ENCODE measurements at regions of chr15 and their contacts with region 1.

Region 1: DNA sequence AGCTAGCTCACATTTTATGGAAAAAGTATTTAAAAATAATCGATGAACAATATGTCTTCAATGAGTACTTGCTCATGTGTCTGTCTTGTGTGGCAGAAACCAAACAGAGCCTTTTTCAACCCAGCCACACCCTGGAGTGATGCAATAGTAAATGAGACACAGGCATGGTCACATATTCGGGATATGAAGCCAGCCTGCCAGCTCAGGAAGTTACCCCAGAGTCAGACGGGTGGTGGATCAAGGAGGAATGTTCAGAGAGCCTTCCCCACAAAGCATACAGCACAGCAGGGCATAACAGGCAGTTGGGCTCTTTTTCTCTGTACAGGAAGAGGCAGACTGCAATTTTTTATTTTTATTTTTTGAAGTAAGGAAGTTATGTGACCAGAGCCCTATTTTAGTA is 27.3 kb downstream of the LARP6 start:
- DNase-seq: peak in 2 of 5 donors; percentile 50 to 60
- ATAC-seq: peak in 3 of 4 donors; percentile 21 to 75 (median 69)
- H3K4me3 ChIP-seq: no peak overlapping the region
- H3K27ac ChIP-seq: peak overlapping the region in 2 of 12 donors; percentile 36 to 48
- H3K4me1 ChIP-seq: peaks cover 0 to 41% (median 9%) of the 10 kb centered on the region in 12 donors
- H3K27me3 ChIP-seq: no peaks in the 10 kb centered on the region
- CTCF ChIP-seq: no peak
- POLR2A ChIP-seq: no peak

Region 2: DNA sequence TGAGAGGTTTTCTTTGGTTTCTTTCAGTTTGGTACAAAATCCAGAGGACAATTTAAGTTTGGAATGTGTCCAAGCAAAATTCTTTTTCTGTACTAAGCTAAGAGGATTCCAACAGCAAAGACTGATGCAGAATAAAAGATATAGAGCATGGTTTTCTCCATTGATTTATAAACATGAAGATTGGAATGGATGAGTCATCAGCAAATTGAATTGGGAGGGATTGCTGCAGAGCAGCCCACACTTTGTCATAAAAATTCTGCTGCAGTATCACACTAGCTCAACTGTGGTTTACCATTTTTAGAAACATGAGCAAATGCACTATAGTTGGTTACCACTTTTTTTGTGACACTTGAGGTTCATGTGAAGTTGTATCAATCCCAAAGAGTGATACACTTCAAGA is 43.4 kb after region 1 on chr15:
- intact Hi-C with region 1: loop called (anchors 1 to 5 kb)
- DNase-seq: no peak
- ATAC-seq: peak in 2 of 4 donors; percentile 42 to 45
- H3K4me3 ChIP-seq: no peak overlapping the region
- H3K27ac ChIP-seq: peak overlapping the region in 4 of 12 donors; percentile 7 to 37 (median 14)
- H3K4me1 ChIP-seq: peaks cover 0 to 39% (median 24%) of the 10 kb centered on the region in 12 donors
- H3K27me3 ChIP-seq: no peaks in the 10 kb centered on the region
- CTCF ChIP-seq: no peak
- POLR2A ChIP-seq: no peak

Region 3: DNA sequence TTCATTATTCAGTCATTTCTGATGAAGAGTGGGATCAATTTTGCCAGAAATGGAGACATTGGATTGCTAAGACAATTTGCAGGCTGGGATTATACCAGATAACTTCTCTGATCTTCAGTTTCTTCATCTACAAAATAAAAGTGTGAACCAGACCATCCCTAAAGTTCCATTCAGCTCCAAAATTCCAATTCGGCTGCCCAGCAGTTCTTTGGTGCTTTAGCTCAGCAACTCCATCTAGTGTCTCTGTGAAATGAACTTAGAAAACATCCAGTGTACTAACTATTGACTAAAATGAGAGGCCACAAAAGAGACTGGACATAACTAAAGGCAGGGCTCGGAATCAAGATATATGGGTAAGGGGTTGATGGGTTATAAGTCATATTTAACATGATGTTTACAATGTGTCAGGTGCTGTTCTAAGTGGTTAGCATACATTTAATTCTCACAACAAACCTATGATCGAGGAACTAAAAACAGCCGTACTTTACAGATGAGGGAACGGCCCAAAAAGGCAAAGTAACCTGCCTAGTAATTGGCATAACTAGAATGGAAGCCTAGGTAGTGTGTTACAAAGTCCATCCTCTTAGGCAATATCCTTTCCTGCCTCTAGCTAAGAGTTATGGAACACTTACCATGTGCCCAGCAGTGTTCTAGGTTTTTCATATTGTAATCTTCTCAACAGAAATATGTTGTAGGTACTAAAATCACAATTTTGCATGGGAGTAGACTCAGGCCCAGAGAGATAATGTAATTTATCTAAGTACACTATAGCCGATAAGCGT is 48.6 kb after region 1 on chr15:
- intact Hi-C with region 1: loop called (anchors 1 to 5 kb)
- DNase-seq: no peak
- ATAC-seq: peak; percentile 11 to 67 (median 59)
- H3K4me3 ChIP-seq: no peak overlapping the region
- H3K27ac ChIP-seq: no peak overlapping the region
- H3K4me1 ChIP-seq: peaks cover 0 to 6% (median 3%) of the 10 kb centered on the region in 12 donors
- H3K27me3 ChIP-seq: no peaks in the 10 kb centered on the region
- CTCF ChIP-seq: peak; percentile 31 to 74 (median 62)
- POLR2A ChIP-seq: no peak

Region 4: DNA sequence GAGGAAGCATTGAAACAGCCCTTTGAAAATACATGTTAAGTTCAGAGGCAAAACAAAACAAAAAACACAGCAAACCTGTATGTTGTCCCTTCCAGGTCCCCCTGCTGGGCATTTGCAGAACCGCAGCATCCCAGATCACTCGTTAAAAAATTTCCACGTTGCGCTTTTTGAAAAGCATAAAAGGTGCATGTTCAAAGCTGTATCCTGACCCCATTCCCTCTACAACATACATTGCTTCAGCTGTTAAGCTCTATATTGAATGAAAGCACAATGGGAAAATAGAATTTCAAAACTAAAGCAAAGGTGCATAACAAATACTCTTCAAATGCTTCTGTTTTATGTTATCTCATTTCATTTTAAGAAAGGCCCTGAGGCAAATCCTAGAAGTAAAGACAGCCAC is 616.9 kb after region 1 on chr15:
- intact Hi-C with region 1: loop called in 1 of 10 experiments (anchors 5 kb)
- DNase-seq: peak in 3 of 5 donors; percentile 40 to 43 (median 42)
- ATAC-seq: peak in 2 of 4 donors; percentile 7 to 10
- H3K4me3 ChIP-seq: no peak overlapping the region
- H3K27ac ChIP-seq: peak overlapping the region in 5 of 12 donors; percentile 13 to 65 (median 41)
- H3K4me1 ChIP-seq: peaks cover 0 to 50% (median 15%) of the 10 kb centered on the region in 12 donors
- H3K27me3 ChIP-seq: no peaks in the 10 kb centered on the region
- CTCF ChIP-seq: peak; percentile 70 to 88 (median 82)
- POLR2A ChIP-seq: no peak